ENCODE measurements at regions of chr14 and their contacts with region 1.

Region 1: GRCh38 chr14:99884834-99885648 is 91.8 kb downstream of the EML1 start:
- DNase-seq: peak; percentile 54

Region 2: DNA sequence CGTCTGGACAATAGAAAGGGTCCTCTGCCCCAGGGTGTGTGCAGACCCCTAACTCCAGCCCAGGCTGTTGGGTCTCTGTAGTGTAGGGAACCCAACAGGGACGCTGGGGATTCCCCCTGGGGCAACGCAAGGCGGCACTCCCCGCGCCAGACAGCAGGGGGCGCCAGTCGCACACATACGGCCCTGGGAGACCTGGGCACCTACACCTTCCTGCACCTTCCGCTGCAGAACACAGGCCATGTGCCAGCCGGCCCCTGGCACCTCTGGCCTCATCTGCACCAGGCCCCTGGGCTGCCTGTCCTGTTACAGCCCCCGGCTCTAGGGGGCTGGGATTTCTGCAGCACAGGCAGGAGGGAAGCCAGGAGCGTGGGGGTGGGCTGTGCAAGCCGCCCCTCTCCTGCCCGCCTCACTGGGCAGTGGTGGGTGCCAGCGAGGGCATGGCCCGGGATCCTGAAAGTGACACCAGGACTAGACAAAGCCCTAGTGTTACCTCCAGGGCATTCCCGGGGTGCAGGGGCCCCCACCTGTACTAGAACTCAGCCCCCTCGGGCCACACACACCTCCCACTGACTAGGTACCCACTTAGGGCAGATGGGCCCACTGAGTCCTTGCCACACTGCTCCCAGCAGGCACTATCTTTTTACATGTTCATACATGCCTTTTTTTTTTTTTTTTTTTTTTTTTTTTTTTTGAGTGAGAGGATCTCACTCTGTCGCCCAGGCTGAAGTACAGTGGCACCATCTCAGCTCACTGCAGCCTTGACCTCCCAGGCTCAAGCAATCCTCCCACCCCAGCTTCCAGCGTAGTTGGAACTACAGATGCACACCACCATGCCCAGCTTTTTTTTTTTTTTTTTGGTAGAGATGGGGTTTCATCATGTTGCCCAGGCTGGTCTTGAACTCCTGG is 366.3 kb before region 1 on chr14:
- in situ Hi-C with region 1: loop called (anchors 25 kb)
- DNase-seq: peak; percentile 74